KBM-7 (cell line): ENCODE measurements at regions of chr11 and their contacts with region 1.

Region 1: DNA sequence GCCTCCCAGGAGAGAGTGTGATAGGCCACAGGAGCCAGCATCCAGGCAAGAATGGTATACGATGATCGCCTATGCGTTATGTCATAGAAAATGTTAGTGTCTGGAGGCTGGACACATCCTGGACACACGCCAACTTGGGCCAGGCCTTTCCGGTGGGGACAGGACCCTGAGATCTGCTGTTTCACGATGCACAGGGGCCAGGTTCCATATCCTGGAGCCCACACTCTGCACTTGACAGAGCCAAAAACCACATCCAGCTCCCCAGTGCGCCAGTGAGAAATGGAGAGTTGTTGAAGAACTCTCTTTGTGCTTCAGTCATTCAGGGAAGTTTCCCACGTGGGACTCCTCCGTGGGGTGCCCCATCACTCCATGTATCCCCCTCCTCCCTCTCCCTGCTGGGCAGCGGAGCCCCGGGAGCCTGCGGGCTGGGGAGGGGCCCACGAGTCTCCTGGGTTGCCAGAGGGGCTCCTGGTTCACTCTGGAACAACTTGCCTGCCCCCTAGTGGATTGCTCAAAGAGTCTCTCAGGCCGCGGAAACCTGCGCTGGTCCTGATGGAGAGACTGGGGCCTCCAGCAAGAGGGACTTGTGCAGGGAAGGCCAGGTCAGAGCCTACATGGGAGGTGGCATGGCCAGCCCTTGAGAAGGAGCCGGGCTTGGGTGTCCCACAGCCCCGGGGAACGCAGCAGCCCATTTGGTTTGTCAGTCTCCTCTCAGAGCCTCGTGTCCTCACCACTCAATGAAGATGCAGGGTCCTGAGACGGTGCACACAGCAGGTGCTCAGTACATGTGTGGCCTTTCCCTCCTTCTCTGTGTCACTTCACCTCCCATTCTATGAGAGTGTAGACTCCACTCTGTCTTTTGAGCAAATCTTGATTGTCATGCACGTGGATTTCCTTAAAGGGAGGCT is 10.2 kb upstream of the LRRC32 start:
- DNase-seq: peak; percentile 78

Region 2: GRCh38 chr11:76296731-76297542 is 383.8 kb before region 1 on chr11:
- in situ Hi-C with region 1: no loop called
- DNase-seq: no peak

Region 3: DNA sequence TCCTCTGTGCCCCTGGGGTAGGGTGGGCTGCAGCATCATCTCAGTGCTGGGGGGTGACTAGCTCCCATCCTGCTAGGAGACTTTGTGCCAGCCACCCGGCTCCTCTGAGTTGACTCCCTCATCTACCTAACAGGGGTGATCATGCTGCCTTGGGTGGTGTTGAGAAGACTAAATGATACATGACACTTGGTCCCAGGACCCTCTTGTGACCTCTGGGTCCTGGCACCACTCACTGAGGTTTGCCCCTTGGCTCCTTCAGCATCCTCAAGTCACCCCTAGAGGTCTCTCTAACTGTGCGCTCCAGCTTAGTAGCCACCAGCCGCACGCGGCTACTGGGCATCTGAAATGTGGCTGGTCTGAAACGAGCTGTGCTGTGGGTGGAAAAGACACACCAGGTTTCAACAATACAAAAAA is 82.3 kb before region 1 on chr11:
- in situ Hi-C with region 1: loop called (anchors 25 kb)
- DNase-seq: peak; percentile 60

Region 4: DNA sequence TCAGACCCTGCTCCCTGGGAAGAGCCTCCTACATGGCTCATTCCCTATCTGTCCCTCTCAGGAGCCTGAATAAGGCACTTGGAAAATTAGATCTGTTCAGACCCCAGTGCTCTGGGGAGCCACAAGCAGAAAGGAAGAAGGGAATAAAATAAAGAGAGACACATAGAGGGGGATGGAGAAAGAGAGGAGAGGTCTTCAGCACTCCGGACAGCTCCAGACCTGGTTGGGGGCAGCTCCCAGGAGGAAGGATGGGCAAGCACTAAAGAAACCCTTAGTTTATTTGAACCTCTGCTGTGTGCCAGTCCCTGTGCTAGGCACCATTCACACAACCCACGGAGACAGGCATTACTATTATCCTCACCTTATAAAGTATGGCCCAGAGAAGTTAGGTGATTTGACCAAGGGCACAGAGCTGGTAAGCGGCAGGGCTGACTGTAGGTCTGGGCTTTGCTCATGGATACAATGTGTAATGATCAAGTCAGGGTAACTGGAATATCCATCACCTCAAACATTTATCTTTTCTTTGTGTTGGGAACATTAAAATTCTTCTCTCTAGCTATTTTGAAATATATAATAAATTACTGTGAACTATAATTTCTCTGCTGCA is 43.5 kb after region 1 on chr11:
- in situ Hi-C with region 1: no loop called
- DNase-seq: peak; percentile 37

Region 5: GRCh38 chr11:76742902-76743301 is 62.1 kb after region 1 on chr11:
- in situ Hi-C with region 1: no loop called
- DNase-seq: no peak

Region 6: GRCh38 chr11:76872959-76873827 is 192.4 kb after region 1 on chr11:
- in situ Hi-C with region 1: no loop called
- DNase-seq: no peak